Posterior cingulate gyrus (tissue), 11 donors: ENCODE measurements at regions of chr19 and their contacts with region 1.

Region 1: GRCh38 chr19:36528194-36528920 is at the start of gene ZNF260:
- DNase-seq: peak; percentile 95 to 99 (median 97)

Region 2: DNA sequence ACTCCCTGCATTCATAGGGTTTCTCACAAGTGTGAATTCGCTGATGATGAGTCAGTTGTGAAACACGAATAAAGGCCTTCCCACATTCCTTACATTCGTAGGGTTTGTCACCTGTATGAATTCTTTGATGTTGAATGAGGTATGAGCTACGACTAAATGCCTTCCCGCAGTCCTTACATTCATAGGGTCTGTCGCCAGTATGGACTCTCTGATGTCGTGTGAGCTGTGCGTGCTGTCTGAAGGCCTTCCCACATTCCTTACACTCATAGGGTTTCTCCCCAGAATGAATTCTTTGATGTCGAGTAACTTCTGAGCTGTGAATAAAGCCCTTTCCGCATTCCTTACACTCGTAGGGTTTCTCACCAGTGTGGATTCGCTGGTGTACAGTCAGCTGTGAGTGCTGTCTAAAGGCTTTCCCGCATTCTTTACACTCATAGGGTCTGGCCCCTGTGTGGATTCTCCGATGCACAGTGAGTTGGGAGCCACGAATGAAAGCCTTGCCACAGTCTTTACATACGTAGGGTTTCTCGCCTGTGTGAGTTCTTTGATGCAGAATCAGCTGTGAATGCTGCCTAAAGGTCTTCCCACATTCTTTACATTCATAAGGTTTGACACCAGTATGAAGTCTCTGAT is 345.6 kb before region 1 on chr19:
- intact Hi-C with region 1: no loop called
- DNase-seq: peak in 1 of 10 donors; percentile 8

Region 3: DNA sequence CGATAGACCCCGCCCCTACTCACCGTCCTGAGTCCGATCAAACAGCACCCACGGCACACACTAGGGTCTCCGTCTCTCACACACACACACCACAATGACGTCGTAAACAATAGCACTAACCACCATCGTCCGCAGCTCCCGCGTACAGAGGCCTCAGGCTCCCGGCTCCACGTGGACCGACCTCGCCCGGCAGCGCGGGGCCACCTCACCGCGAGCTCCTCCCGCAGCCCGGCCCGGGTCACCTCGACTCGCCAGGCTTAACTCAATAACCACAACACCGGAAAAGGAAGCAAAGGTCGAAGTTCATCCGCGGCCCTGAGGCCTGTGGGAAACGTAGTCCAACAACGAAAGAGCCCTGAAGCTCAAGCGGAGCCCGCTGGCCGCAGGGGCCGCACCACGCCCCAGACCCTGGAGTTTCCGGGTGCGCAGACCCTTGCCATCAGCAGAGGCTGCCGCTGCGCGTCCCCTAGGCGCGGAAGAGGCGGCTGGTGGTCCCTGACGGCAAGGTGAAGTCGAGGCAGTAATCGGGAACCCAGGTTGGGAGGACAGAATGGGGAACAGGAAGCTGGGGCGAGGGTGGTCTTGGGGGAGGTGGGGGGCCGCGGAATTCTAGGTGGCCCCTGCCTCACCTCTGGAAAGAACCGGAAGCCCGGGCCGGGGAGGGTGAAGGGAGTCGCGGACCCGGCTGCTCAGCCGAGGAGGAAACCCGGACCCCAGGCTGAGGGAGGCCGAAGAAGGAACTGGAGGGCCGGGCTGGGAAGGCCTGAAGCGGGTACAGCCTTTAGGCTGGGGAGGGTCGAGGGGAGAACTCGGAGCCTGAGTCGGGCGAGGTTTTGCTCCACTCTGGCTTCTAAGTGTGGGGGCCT is 44.9 kb after region 1 on chr19 and contains the start of gene ZNF529:
- intact Hi-C with region 1: loop called (anchors 5 kb)
- DNase-seq: peak; percentile 85 to 99 (median 92)

Region 4: DNA sequence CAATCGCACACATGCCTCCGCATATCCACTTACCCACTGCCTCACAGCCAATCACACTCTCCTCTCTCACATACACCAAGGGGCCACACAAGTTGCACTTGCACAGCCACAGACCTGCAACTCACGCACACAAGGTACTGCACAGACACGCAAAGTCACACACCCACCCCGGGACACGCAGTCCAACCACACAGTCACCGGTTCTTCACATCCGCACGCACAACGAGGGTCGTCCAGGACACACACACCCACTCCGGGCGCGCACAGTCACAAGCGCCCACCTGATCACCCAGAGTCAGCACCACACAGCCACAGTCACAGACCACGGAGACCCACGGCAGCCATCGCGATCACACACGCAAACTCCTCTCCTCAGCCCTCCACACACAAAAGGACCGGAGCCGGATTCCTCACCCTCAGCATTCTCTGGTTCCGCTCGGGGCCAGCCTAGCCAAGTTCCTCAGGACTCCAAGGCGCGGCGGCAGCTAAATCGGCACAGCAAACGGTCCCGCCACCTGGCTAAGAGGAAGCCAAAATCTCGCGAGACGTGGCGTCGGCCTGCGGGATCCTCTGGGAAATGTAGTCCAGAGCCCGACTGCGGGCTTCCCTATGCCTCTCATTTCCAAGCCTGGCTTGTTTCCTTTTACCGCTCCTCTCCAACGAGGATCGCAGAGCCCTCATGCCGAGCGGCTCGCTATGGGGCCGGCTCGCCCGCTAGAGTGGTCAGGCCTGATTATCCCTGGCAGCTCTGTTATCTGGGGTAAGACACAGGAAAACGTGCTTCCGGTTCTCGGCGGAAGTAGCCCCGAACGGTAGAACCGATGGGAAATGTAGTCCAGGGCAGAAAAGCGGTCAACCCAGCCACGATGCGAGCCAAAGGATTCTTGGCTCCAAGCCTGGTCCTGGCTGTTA is 244.2 kb after region 1 on chr19 and contains the start of gene ZNF850:
- intact Hi-C with region 1: loop called (anchors 2 kb)
- DNase-seq: peak; percentile 87 to 99 (median 92)